Activated CD8-positive, alpha-beta memory T cell treated with anti-CD3 and anti-CD28 coated beads, Interleukin-2, amount 10 ng/mL, durations not matched to agents 7 days and 5 days (primary cell): ENCODE measurements at regions of chr14 and their contacts with region 1.

Region 1: GRCh38 chr14:75560962-75561432 is 17.4 kb upstream of the FLVCR2 start:
- DNase-seq: peak; percentile 65
- ATAC-seq: peak; percentile 16
- H3K4me3 Mint-ChIP-seq: no peak overlapping the region
- H3K27ac Mint-ChIP-seq: peak overlapping the region; percentile 78
- H3K4me1 Mint-ChIP-seq: peaks cover 68% of the 10 kb centered on the region
- H3K27me3 Mint-ChIP-seq: no peaks in the 10 kb centered on the region

Region 2: DNA sequence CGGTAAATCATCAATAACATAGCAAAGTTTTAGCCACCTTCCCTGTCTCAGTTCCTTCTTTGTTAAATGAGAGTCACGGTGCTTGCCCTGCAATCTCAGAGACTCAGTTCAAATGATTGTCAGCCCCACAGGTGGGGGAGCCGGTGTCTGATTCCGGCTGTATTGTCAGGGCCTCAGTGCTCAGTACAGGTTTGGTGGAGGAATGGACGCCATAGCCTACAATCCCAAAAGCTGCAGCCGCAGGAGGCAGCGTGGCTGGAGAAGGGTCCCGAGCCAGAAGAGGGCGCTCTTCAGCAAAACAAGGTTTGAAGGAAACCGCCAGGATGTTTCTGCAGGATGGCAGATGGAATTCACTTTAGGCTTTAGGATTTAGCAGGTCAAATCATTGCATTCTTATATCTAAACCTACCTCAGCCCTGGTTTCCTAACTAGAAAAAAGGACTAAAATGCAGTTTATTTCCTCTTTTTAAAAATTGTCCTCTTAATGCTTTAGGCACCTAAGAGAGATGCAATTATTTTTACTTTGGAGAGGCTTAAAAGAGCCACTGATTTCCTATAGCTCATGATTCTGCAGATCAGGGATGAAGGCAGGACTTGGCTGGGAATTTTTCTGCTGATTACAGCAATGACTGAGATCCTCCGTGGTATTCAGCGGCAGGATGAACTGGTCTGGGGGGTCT is 253.2 kb before region 1 on chr14:
- CTCF ChIA-PET with region 1: interaction called, 23 read pairs
- DNase-seq: peak; percentile 77
- ATAC-seq: peak; percentile 59
- H3K4me3 Mint-ChIP-seq: no peak overlapping the region
- H3K27ac Mint-ChIP-seq: no peak overlapping the region
- H3K4me1 Mint-ChIP-seq: peaks cover 37% of the 10 kb centered on the region
- H3K27me3 Mint-ChIP-seq: peaks cover 3% of the 10 kb centered on the region

Region 3: GRCh38 chr14:75497191-75497590 is 63.8 kb before region 1 on chr14:
- CTCF ChIA-PET with region 1: interaction called, 48 read pairs
- DNase-seq: peak; percentile 84
- ATAC-seq: peak; percentile 73
- H3K4me3 Mint-ChIP-seq: peak overlapping the region; percentile 63
- H3K27ac Mint-ChIP-seq: peak overlapping the region; percentile 93
- H3K4me1 Mint-ChIP-seq: peaks cover 74% of the 10 kb centered on the region
- H3K27me3 Mint-ChIP-seq: no peaks in the 10 kb centered on the region

Region 4: DNA sequence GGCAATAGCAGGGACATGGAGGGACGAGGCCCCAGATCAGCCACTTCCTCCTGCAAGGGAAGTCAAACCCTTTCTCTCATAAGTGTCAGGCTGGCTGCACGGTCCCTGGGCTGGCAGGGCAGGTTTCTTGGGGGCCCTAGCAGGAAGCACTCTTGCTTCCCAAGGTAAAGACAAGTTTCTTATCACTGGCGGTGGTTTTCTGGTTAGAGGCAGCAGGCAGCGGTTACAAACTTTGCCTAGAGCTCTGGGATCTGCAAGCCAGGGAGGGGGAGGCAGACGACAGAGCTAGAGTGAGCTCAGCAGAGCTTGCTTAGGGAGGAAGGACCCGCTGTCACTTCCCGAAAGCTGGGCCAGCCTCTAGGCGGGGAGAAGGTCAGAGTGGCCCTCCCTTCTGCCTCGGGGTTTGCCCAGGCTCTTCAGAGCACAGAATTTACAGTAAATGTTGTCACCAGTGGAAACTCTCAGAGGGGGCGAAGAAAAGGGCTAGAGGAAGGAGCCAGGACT is 18.4 kb before region 1 on chr14:
- CTCF ChIA-PET with region 1: interaction called, 59 read pairs
- DNase-seq: peak; percentile 90
- ATAC-seq: peak; percentile 85
- H3K4me3 Mint-ChIP-seq: peak overlapping the region; percentile 68
- H3K27ac Mint-ChIP-seq: peak overlapping the region; percentile 99
- H3K4me1 Mint-ChIP-seq: peaks cover 74% of the 10 kb centered on the region
- H3K27me3 Mint-ChIP-seq: no peaks in the 10 kb centered on the region

Region 5: GRCh38 chr14:75577729-75578101 is 16.7 kb after region 1 on chr14:
- CTCF ChIA-PET with region 1: interaction called, 43 read pairs
- DNase-seq: peak; percentile 84
- ATAC-seq: peak; percentile 96
- H3K4me3 Mint-ChIP-seq: peak overlapping the region; percentile 78
- H3K27ac Mint-ChIP-seq: peak overlapping the region; percentile 53
- H3K4me1 Mint-ChIP-seq: peaks cover 21% of the 10 kb centered on the region
- H3K27me3 Mint-ChIP-seq: no peaks in the 10 kb centered on the region

Region 6: GRCh38 chr14:75615200-75615599 is 54.2 kb after region 1 on chr14:
- CTCF ChIA-PET with region 1: no interaction called
- DNase-seq: no peak
- ATAC-seq: no peak
- H3K4me3 Mint-ChIP-seq: no peak overlapping the region
- H3K27ac Mint-ChIP-seq: no peak overlapping the region
- H3K4me1 Mint-ChIP-seq: no peaks in the 10 kb centered on the region
- H3K27me3 Mint-ChIP-seq: no peaks in the 10 kb centered on the region